Activated CD4-positive, alpha-beta memory T cell treated with anti-CD3 and anti-CD28 coated beads for 36 hours (primary cell): ENCODE measurements at regions of chr11 and their contacts with region 1.

Region 1: DNA sequence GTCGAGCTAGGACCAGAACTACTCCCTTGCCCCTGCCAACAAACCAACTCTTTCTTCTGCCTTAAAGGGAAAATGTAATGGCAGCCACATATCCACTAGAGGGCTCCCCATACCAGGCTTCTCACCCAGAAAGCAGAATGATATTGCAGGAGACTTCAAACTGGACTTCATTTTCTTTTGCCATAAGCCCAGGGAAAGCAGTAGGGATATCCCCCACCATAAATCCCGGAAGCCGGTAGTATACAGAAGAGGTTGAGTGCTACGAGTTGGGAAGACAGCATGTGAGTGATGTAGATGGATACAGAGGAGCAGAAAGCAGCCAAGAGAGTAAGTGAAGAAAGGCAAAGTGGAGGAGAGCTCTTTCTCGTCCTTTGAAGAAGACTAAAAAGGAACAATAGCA is 12.1 kb downstream of the PLAAT5 start:
- DNase-seq: peak; percentile 58
- H3K4me3 Mint-ChIP-seq: no peak overlapping the region
- H3K27ac Mint-ChIP-seq: no peak overlapping the region
- H3K4me1 Mint-ChIP-seq: no peaks in the 10 kb centered on the region
- H3K27me3 Mint-ChIP-seq: peaks cover 2% of the 10 kb centered on the region

Region 2: DNA sequence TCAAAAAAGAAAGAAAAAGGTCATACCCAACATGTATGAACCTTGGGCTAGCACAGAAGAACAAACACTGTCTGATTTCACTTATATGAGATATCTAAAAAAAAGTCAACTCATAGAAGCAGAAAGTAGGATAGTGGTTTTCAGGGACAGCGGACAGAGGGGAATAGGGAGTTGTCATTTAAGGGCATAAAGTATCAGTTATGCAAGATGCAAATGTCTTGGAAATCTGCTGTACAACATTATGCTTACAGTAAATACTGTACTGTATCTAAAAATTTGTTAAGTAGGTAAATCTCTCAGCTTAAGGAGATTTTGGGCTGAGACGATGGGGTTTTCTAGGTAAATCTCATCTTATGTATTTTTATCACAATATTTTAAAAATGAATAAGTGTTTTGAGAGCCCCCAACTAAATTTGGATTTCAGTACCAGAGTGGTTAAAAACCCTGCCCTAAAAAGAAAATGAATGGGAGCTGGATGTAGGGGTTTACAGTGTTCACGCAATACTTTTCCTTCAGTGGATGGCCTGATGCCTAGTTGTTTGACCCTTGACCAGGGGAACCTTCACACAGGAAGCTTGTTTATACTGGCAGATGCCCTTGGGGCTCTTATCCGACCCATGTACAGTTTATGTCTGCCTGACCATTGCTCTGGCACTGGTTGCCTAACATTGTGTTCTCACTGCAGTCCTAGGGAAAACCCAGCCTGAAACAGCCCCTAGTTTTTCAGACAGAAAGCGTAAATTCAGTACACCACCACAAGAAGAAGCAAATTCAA is 74.5 kb before region 1 on chr11:
- CTCF ChIA-PET with region 1: no interaction called
- POLR2A ChIA-PET with region 1: no interaction called
- intact Hi-C with region 1: no loop called
- DNase-seq: no peak
- H3K4me3 Mint-ChIP-seq: no peak overlapping the region
- H3K27ac Mint-ChIP-seq: no peak overlapping the region
- H3K4me1 Mint-ChIP-seq: no peaks in the 10 kb centered on the region
- H3K27me3 Mint-ChIP-seq: peaks cover 11% of the 10 kb centered on the region

Region 3: GRCh38 chr11:63462137-63462536 is 16.8 kb before region 1 on chr11:
- CTCF ChIA-PET with region 1: interaction called, 15 read pairs
- POLR2A ChIA-PET with region 1: no interaction called
- intact Hi-C with region 1: no loop called
- DNase-seq: no peak
- H3K4me3 Mint-ChIP-seq: no peak overlapping the region
- H3K27ac Mint-ChIP-seq: no peak overlapping the region
- H3K4me1 Mint-ChIP-seq: no peaks in the 10 kb centered on the region
- H3K27me3 Mint-ChIP-seq: peaks cover 13% of the 10 kb centered on the region

Region 4: DNA sequence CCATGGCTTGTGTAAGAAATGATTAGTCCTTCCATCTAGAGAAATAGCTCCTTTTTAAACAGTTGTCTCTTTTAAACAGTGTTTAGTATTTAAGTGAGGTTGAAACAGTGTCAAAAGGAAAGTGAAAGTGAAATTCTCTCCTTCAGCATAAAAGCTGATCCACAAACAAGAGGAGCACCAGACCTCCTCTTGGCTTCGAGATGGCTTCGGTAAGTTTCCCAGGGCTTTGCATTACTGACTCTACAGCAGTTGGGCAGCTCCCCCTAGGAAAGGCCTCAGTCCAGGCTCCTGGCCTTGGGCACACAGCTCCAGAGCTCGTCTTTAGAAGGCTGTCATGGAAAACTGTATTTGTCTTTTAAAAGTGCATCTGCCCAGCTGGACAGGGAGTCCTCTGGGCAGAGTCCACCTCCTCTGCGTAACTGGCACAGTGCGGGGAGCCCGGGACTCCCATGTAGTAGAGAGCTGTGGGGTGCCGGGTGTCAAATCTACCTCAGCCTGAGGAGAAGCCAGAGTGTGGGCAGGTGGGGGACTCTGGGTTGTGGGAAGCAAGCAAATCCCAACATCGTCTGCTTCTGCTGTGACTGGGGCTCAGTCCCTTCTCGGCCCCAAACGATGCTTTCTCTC is 57.9 kb after region 1 on chr11 and contains the start of gene PLAAT4:
- CTCF ChIA-PET with region 1: interaction called, 15 read pairs
- POLR2A ChIA-PET with region 1: no interaction called
- intact Hi-C with region 1: no loop called
- DNase-seq: peak; percentile 44
- H3K4me3 Mint-ChIP-seq: peak within 1 kb of the TSS; percentile 81
- H3K27ac Mint-ChIP-seq: peak within 1 kb of the TSS; percentile 84
- H3K4me1 Mint-ChIP-seq: peaks cover 82% of the 10 kb centered on the region
- H3K27me3 Mint-ChIP-seq: no peaks in the 10 kb centered on the region
- total RNA-seq, gene PLAAT4: 35.7 to 36.3 TPM

Region 5: DNA sequence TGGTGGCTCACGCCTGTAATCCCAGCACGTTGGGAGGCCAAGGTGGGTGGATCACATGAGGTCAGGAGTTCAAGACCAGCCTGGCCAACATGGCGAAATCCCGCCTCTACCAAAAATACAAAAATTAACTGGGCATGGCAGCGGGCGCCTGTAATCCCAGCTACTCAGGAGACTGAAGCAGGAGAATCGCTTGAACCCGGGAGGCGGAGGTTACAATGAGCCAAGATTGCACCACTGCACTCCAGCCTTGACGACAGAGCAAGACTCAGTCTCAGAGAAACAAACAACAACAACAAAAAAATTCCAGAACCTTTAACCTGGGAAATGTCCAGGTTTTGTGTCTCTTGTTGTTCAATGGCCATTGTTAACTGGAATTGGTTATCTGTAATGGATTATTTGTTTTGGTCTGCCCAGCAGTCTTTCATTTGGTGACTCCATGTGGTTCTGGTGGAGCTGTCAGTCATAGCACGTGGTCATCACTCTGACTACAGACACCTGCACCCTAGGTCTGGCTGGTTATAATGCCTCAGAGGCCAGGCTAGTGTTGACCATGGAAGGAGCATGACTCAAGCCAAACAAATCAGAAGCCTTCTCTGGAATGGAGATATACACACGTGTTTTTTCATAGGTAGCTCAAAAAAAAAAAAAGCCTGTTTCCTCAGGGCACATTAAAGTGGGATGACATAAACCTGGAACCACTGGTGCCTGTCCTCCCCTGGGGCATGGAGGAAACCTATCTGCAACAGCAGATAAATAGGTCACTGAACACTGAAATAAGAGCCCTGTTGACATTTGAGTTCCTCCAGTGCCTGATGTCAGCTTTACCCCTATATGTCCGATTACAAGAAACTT is 143.3 kb after region 1 on chr11:
- CTCF ChIA-PET with region 1: interaction called, 19 read pairs
- POLR2A ChIA-PET with region 1: no interaction called
- intact Hi-C with region 1: no loop called
- DNase-seq: no peak
- H3K4me3 Mint-ChIP-seq: no peak overlapping the region
- H3K27ac Mint-ChIP-seq: no peak overlapping the region
- H3K4me1 Mint-ChIP-seq: peaks cover 5% of the 10 kb centered on the region
- H3K27me3 Mint-ChIP-seq: no peaks in the 10 kb centered on the region

Region 6: GRCh38 chr11:63635762-63636465 is 157.0 kb after region 1 on chr11:
- CTCF ChIA-PET with region 1: interaction called, 176 read pairs
- POLR2A ChIA-PET with region 1: interaction called, 3 read pairs
- intact Hi-C with region 1: loop called (anchors 1 kb)
- DNase-seq: peak; percentile 73
- H3K4me3 Mint-ChIP-seq: no peak overlapping the region
- H3K27ac Mint-ChIP-seq: no peak overlapping the region
- H3K4me1 Mint-ChIP-seq: peaks cover 17% of the 10 kb centered on the region
- H3K27me3 Mint-ChIP-seq: no peaks in the 10 kb centered on the region